PC-3 (cell line): ENCODE measurements at regions of chr10 and their contacts with region 1.

Region 1: DNA sequence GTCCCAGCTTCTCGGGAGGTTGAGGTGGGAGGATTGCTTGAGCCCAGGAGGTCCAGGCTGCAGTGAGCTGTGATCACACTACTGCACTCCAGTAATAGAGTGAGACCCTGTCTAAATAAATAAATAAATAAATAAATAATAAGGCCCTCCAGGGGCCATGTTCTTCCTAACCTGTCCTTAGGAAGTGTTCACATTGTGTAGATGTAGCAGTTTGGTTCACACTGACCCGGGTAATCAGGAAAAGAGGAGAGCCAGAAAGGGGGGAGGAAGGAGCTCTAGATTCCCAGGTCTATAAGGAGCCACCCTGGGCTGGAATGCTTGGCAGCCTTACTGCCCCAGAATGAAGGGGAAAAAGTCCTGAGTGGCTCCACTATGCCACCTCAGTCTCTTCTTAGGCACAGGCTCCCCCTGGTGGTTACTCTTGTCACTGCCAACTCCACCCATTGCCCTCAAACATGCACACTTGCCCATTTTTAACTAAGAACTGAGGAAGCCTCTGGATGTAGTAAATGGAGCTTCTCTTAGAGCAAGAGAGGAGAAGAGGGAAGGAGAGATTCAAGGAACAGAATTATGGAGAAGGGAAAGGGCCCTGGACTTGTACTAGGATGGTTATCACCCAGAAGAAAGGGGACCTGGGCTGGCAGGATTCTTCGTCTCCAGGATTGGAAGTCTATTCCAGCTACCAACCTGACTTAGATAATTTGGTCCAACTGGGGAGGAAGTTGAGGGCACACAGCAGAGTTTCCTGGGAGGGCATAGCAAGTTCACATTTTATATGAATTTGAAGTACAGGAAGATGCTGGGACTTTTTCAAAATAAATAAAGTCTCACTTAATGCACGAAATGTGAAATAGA is 7.8 kb downstream of the HPS6 start:
- DNase-seq: peak; percentile 80
- ATAC-seq: peak; percentile 99
- H3K4me3 ChIP-seq: no peak overlapping the region
- H3K27ac ChIP-seq: no peak overlapping the region
- H3K4me1 ChIP-seq: no peaks in the 10 kb centered on the region
- H3K27me3 ChIP-seq: no peaks in the 10 kb centered on the region
- CTCF ChIP-seq: peak; percentile 88

Region 2: DNA sequence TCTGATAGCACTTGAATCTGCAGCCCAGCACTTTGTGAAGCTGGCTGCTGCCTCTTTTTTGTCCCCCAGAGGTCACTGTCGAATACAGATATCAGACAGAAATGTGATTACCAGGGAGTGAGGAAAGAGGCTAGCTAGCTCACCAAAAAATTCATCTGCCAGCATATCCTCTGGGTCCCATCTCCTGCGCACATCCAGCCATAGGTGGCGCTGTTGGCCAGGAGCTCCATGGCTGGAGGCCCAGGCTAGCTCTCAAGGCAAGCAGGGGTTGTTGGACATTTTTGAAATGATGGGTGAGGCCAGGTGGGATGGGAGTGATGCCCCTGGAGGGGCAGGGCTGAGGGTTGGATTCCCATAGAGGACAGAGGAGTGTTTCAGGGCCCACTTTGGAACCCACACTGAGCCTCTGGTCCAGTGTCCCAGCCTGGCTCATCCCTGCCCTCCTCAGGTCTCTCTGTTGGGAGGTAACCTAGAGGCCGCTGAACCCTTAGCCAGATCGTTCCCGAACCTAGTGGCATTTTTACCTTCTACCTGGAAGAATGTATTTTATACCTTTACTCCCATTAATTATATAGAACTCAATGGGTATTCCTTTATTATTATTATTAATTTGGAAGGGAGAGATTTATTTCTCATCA is 470.0 kb before region 1 on chr10:
- CTCF ChIA-PET with region 1: no interaction called
- POLR2A ChIA-PET with region 1: no interaction called
- intact Hi-C with region 1: loop called (anchors 10 kb)
- DNase-seq: peak; percentile 76
- ATAC-seq: peak; percentile 91
- H3K4me3 ChIP-seq: no peak overlapping the region
- H3K27ac ChIP-seq: no peak overlapping the region
- H3K4me1 ChIP-seq: no peaks in the 10 kb centered on the region
- H3K27me3 ChIP-seq: no peaks in the 10 kb centered on the region
- CTCF ChIP-seq: peak; percentile 89

Region 3: DNA sequence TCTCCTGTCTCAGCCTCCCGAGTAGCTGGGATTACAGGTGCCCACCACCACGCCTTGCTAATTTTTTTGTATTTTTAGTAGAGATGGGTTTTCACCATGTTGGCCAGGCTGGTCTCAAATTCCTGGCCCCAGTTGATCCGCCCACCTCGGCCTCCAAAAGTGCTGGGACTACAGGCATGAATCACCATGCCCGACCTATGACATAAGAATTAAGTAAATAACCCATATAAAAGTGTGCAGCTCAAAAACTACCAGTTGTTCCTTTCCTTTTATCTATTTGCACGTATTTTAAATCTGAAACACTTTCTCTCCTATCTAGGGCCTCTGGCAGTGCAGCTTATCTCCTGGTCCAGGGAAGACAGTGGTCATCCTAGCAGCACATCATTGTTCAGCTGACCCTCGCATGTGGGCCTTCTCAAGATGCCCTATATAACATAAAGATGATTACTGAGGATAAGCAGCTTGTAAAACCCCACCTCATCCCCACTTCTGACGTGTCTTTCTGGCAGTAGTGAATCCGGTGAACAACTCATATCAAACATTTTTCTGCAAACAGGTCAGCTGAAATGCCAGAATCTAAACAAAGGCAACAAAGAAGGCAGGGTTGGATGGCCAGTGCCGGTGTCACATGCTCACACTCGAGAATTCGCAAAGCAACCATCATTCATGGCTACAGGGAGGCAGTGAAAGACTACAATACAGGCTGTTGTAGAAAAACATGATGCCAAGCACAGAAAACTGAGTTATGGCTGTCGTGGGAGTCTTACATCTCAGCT is 193.3 kb before region 1 on chr10:
- CTCF ChIA-PET with region 1: no interaction called
- POLR2A ChIA-PET with region 1: no interaction called
- intact Hi-C with region 1: no loop called
- DNase-seq: peak; percentile 89
- ATAC-seq: peak; percentile 87
- H3K4me3 ChIP-seq: no peak overlapping the region
- H3K27ac ChIP-seq: peak overlapping the region; percentile 95
- H3K4me1 ChIP-seq: peaks cover 26% of the 10 kb centered on the region
- H3K27me3 ChIP-seq: no peaks in the 10 kb centered on the region
- CTCF ChIP-seq: no peak